ENCODE measurements at regions of chr10 and their contacts with region 1.

Region 1: GRCh38 chr10:120423431-120424197 is 33.4 kb upstream of the PLPP4 start:
- DNase-seq: peak; percentile 45 to 57 (median 57)
- ATAC-seq: peak; percentile 77
- H3K4me3 ChIP-seq: no peak overlapping the region
- H3K27ac ChIP-seq: no peak overlapping the region
- H3K4me1 ChIP-seq: no peaks in the 10 kb centered on the region
- H3K27me3 ChIP-seq: no peaks in the 10 kb centered on the region; a peak in 1 of 5 replicates
- CTCF ChIP-seq: peak; percentile 62 to 68 (median 67)
- EP300 ChIP-seq: no peak
- POLR2A ChIP-seq: no peak
- RAD21 ChIP-seq: peak; percentile 39 to 69

Region 2: GRCh38 chr10:120381931-120382330 is 41.7 kb before region 1 on chr10:
- CTCF ChIA-PET with region 1: no interaction called
- POLR2A ChIA-PET with region 1: no interaction called
- in situ Hi-C with region 1: no loop called
- intact Hi-C with region 1: no loop called
- DNase-seq: no peak
- ATAC-seq: no peak
- H3K4me3 ChIP-seq: no peak overlapping the region
- H3K27ac ChIP-seq: no peak overlapping the region
- H3K4me1 ChIP-seq: no peaks in the 10 kb centered on the region
- H3K27me3 ChIP-seq: no peaks in the 10 kb centered on the region
- CTCF ChIP-seq: no peak
- EP300 ChIP-seq: no peak
- POLR2A ChIP-seq: no peak
- RAD21 ChIP-seq: no peak

Region 3: DNA sequence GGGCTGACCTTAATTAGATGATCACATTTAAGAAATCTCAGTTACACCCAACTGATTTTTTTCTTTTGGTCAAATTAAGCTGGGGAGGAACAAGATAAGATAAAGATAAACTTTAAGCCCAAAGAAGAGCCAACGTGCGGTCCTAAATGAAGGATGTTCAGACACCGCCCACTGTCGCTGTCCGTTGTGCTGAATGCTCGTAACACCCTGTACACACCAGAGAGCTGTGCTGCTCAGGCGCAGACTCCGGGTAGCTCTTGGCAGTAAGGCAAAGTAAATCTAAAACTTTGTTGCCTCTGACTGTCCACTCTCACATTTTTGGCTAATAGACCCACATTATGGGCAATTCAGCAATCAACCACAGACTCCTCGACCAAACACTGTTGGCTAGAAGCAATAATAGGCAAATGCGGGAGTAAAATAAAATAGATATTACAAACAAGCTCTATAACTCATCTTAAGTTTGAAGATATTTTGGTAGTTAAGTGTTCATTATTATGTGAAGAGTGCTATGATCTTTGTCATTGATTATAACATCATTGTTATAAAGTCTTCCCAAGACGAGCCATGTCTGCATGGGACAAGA is 90.5 kb after region 1 on chr10:
- CTCF ChIA-PET with region 1: no interaction called
- POLR2A ChIA-PET with region 1: no interaction called
- in situ Hi-C with region 1: no loop called
- intact Hi-C with region 1: no loop called
- DNase-seq: peak; percentile 24 to 56 (median 31)
- ATAC-seq: peak; percentile 80
- H3K4me3 ChIP-seq: no peak overlapping the region
- H3K27ac ChIP-seq: no peak overlapping the region
- H3K4me1 ChIP-seq: no peaks in the 10 kb centered on the region
- H3K27me3 ChIP-seq: no peaks in the 10 kb centered on the region
- CTCF ChIP-seq: no peak
- EP300 ChIP-seq: no peak
- POLR2A ChIP-seq: no peak
- RAD21 ChIP-seq: no peak

Region 4: DNA sequence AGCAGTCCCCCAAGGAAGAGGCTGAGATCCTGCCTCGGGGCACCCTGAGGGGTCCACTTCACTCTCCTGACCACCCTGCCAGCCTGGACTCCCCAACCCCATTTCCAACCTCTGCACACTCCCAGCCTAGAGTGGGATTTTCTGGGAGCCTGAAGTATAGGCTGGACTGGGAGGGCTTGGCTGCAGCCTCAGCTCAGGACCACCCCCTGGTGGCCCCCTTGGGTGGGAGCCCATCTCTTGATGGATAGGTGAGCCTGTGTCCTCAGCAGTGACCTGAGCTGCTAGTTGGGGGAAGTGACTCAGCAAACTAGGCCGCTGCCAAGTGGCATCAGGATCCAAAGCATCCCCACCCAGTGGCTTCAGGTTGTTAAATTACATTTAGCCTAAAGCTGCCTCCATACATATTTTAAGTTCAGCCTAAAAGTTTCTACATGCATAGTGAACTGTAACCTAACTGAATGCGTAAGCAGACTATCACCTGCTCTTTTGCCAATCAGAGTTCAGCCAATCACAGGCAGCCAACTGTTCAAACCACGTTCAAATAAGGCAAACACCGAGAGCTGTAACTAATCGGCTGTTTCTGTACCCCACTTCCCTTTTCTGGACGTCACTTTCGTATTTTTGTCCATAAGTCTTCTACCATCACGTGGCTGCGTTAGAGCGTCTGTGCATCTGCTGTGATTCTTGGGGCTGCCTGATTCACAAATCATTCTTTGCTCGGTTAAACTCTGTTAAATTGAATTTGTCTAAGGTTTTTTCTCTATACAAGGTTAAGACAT is 177.4 kb after region 1 on chr10:
- CTCF ChIA-PET with region 1: no interaction called
- POLR2A ChIA-PET with region 1: no interaction called
- in situ Hi-C with region 1: no loop called
- intact Hi-C with region 1: loop called (anchors 10 kb)
- DNase-seq: peak; percentile 14 to 17 (median 16)
- ATAC-seq: peak; percentile 55; the same call in 1 of the 3 replicates
- H3K4me3 ChIP-seq: no peak overlapping the region
- H3K27ac ChIP-seq: no peak overlapping the region
- H3K4me1 ChIP-seq: no peaks in the 10 kb centered on the region
- H3K27me3 ChIP-seq: no peaks in the 10 kb centered on the region
- CTCF ChIP-seq: 0 out of 6 replicates have a peak, but pooled peaks of 1 of the 3 experiments have one; percentile 14
- EP300 ChIP-seq: no peak
- POLR2A ChIP-seq: no peak
- RAD21 ChIP-seq: peak in 1 of 2 experiments; percentile 12; a peak in 1 of 4 replicates

Region 5: GRCh38 chr10:120735773-120736371 is 312.3 kb after region 1 on chr10:
- CTCF ChIA-PET with region 1: no interaction called
- POLR2A ChIA-PET with region 1: no interaction called
- in situ Hi-C with region 1: no loop called
- intact Hi-C with region 1: loop called (anchors 5 kb)
- DNase-seq: peak; percentile 3 to 12 (median 4)
- ATAC-seq: peak; percentile 64; the same call in 2 of the 3 replicates
- H3K4me3 ChIP-seq: no peak overlapping the region
- H3K27ac ChIP-seq: no peak overlapping the region
- H3K4me1 ChIP-seq: no peaks in the 10 kb centered on the region
- H3K27me3 ChIP-seq: no peaks in the 10 kb centered on the region
- CTCF ChIP-seq: peak in 2 of 3 experiments; percentile 47 to 51; a peak in 4 of 6 replicates
- EP300 ChIP-seq: no peak
- POLR2A ChIP-seq: no peak
- RAD21 ChIP-seq: peak; percentile 21 to 45; a peak in 2 of 4 replicates

Region 6: GRCh38 chr10:122112021-122112616 is 1688.5 kb after region 1 on chr10:
- CTCF ChIA-PET with region 1: no interaction called
- POLR2A ChIA-PET with region 1: no interaction called
- in situ Hi-C with region 1: no loop called
- intact Hi-C with region 1: no loop called
- DNase-seq: no peak
- ATAC-seq: no peak
- H3K4me3 ChIP-seq: no peak overlapping the region
- H3K27ac ChIP-seq: no peak overlapping the region
- H3K4me1 ChIP-seq: peaks cover 0 to 16% of the 10 kb centered on the region in 2 experiments; a peak in 2 of 5 replicates
- H3K27me3 ChIP-seq: peaks cover 5 to 51% of the 10 kb centered on the region in 2 experiments; a peak in 4 of 5 replicates
- CTCF ChIP-seq: no peak
- EP300 ChIP-seq: no peak
- POLR2A ChIP-seq: no peak
- RAD21 ChIP-seq: no peak

Measured in K562 (cell line).